ENCODE measurements at regions of chr16 and their contacts with region 1.

Region 1: GRCh38 chr16:11639925-11640899 is 28.0 kb upstream of the SNN start:
- DNase-seq: peak; percentile 97
- H3K4me3 ChIP-seq: no peak overlapping the region
- CTCF ChIP-seq: no peak

Region 2: GRCh38 chr16:10729104-10730048 is 910.8 kb before region 1 on chr16:
- CTCF ChIA-PET with region 1: no interaction called
- POLR2A ChIA-PET with region 1: no interaction called
- DNase-seq: no peak
- H3K4me3 ChIP-seq: no peak overlapping the region
- CTCF ChIP-seq: no peak

Region 3: DNA sequence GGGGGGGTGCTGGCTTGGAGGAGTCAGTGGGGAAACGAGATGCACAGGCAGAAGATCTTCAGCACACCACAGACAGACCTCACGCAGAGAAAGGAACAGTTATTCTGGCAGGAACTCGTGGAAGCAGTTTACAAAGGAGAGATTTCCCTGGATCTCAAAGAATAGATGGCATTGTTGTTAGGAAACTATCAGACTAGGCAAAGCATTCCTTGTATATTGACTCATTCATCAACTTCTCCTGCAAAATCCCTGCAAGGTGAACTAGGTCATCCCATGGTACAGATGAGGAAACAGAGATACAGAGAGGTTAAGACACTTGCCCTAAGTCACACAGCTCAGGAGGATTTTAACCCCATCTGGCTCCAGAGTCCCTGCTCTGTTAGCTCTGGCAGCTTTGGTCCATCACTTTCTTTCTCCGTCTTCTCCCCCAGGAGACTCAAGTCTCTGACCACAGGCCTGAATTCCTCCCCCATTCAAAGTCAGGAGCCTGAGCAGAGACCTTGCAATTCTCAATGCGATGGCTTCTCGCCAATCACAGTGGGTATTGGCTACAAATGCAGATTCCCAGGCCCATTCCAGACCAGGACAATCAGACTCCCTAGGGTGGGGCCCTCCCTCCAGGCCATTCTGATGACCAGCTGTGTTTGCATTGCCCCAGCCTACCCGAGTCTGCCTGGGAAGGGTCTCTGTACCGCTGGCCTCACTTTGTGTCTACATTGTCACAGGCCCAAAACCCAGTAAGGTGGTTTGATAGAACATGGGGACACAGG is 109.9 kb before region 1 on chr16:
- CTCF ChIA-PET with region 1: interaction called, 76 read pairs
- POLR2A ChIA-PET with region 1: interaction called, 5 read pairs
- DNase-seq: no peak
- H3K4me3 ChIP-seq: no peak overlapping the region
- CTCF ChIP-seq: no peak

Region 4: DNA sequence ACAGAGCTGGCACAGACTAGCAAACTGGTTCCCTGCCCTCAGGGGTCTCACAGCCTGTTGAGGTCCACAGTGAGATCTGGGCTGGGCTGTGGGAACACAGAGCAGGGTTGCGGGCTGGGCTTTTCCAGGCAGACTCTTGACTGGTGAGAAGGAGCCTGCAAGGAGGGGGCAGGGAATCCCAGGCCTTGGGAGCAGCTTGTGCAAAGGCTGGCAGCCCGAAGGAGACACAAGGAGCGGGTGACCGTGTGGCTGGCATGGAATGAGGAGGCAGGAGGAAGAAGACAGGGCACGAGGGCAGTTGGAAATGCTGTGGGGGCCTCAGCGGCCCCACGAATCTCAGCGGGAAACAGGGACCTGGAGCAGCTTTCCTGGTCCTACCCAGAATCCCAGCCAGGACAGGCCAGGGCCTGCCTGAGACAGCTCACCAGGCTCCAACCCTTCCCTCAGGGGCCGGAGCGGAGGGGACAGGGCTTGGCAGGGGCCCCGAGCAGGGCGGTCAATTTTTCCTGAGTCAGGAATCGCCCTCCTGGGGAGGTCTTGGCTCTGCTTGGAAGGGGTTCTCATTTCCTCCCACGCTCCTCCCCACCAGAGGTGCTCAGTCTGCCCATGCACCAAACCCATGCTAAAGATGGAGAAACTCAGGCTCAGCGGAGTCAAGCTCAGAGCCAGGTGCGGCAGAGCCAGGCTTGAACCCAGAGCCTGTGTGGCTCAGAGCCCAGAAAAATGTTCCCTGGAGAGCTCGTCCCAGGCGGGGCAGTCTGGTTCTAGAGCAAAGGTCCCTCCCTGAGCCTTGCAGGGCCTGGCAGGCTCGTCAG is 18.9 kb after region 1 on chr16:
- CTCF ChIA-PET with region 1: interaction called, 28 read pairs
- POLR2A ChIA-PET with region 1: no interaction called
- DNase-seq: no peak
- H3K4me3 ChIP-seq: no peak overlapping the region
- CTCF ChIP-seq: no peak